Caco-2 (cell line): ENCODE measurements at regions of chr5 and their contacts with region 1.

Region 1: GRCh38 chr5:82312373-82312856 is 34.3 kb upstream of the RPS23 start:
- DNase-seq: peak; percentile 63 to 65
- H3K4me3 ChIP-seq: no peak overlapping the region
- H3K4me3 Mint-ChIP-seq: no peak overlapping the region
- H3K27ac Mint-ChIP-seq: no peak overlapping the region
- H3K4me1 ChIP-seq: no peaks in the 10 kb centered on the region
- H3K4me1 Mint-ChIP-seq: peaks cover 11% of the 10 kb centered on the region
- H3K27me3 ChIP-seq: no peaks in the 10 kb centered on the region
- H3K27me3 Mint-ChIP-seq: no peaks in the 10 kb centered on the region
- CTCF ChIP-seq: peak; percentile 76 to 83

Region 2: GRCh38 chr5:82044010-82044409 is 268.4 kb before region 1 on chr5:
- CTCF ChIA-PET with region 1: no interaction called
- POLR2A ChIA-PET with region 1: no interaction called
- intact Hi-C with region 1: no loop called
- DNase-seq: no peak
- H3K4me3 ChIP-seq: no peak overlapping the region
- H3K4me3 Mint-ChIP-seq: no peak overlapping the region
- H3K27ac Mint-ChIP-seq: no peak overlapping the region
- H3K4me1 ChIP-seq: no peaks in the 10 kb centered on the region
- H3K4me1 Mint-ChIP-seq: no peaks in the 10 kb centered on the region
- H3K27me3 ChIP-seq: no peaks in the 10 kb centered on the region
- H3K27me3 Mint-ChIP-seq: no peaks in the 10 kb centered on the region
- CTCF ChIP-seq: no peak

Region 3: DNA sequence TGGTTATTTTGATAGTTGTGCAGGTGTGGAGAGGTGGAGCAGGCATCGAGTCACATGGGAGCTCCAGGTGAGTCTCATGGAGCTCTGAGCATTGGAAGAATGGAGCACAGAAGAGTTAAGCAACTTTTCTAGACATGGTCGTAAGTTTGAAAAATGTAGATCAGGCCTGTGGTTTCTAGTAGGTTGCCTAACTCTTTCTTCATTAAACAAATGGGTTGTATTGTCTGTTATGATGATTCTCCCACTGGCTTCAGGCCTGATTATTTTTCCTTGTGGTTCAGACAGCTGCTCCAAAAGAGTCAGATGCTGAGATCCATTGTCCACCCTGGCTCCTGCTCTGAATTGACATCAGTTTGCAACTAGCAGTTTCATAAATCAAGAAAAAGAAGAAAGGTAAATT is 46.0 kb after region 1 on chr5:
- CTCF ChIA-PET with region 1: no interaction called
- POLR2A ChIA-PET with region 1: no interaction called
- intact Hi-C with region 1: loop called (anchors 2 kb)
- DNase-seq: no peak
- H3K4me3 ChIP-seq: no peak overlapping the region
- H3K4me3 Mint-ChIP-seq: no peak overlapping the region
- H3K27ac Mint-ChIP-seq: no peak overlapping the region
- H3K4me1 ChIP-seq: no peaks in the 10 kb centered on the region
- H3K4me1 Mint-ChIP-seq: no peaks in the 10 kb centered on the region
- H3K27me3 ChIP-seq: no peaks in the 10 kb centered on the region
- H3K27me3 Mint-ChIP-seq: no peaks in the 10 kb centered on the region
- CTCF ChIP-seq: no peak

Region 4: DNA sequence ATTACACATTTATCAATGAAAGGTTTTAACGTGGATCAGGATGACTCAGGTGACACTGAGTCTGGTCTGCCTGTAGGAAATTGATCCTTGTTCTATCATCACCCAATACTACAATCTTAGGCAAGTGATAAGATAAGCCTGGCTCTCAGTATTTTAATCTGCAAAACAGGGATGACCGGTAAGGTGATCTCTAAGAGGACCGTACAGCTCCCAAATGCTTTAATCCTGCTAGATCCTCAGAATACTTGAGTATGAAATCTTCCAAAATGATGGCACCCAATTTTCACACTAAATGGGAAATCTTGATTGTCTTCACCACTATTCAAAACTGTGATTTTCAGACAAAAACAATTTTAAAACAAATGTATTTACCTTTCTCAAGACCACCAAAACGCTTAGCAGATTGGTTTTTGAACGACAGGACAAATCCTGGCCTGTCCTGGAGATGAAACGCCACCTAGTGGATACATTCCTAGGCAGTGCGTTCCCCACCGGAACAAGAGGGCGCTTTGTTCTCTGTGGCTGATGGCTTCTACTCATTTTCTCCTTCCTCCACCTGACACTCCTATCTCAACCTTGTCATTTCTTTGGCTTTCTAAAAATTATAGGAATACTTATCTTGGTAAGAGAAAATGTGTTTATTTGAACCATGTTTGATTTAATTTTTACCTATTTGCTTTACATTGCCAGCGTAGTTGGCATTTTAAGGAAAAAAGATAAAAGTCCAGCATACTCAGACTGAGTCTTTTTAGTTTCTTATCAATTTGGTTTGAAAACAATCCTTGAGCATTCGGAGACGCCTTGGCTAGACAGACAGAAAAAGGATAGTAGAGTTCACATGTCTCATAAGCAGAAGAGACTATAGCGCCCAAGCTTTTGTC is 1118.0 kb after region 1 on chr5:
- CTCF ChIA-PET with region 1: no interaction called
- POLR2A ChIA-PET with region 1: no interaction called
- intact Hi-C with region 1: loop called (anchors 5 kb)
- DNase-seq: peak; percentile 58 to 73
- H3K4me3 ChIP-seq: no peak overlapping the region
- H3K4me3 Mint-ChIP-seq: no peak overlapping the region
- H3K27ac Mint-ChIP-seq: no peak overlapping the region
- H3K4me1 ChIP-seq: 0 out of 2 replicates have a peak, but pooled peaks cover 4% of the 10 kb centered on the region
- H3K4me1 Mint-ChIP-seq: no peaks in the 10 kb centered on the region
- H3K27me3 ChIP-seq: no peaks in the 10 kb centered on the region
- H3K27me3 Mint-ChIP-seq: peaks cover 3% of the 10 kb centered on the region
- CTCF ChIP-seq: peak; percentile 88 to 95